Heart left ventricle (tissue), 16 donors: ENCODE measurements at regions of chr4 and their contacts with region 1.

Region 1: DNA sequence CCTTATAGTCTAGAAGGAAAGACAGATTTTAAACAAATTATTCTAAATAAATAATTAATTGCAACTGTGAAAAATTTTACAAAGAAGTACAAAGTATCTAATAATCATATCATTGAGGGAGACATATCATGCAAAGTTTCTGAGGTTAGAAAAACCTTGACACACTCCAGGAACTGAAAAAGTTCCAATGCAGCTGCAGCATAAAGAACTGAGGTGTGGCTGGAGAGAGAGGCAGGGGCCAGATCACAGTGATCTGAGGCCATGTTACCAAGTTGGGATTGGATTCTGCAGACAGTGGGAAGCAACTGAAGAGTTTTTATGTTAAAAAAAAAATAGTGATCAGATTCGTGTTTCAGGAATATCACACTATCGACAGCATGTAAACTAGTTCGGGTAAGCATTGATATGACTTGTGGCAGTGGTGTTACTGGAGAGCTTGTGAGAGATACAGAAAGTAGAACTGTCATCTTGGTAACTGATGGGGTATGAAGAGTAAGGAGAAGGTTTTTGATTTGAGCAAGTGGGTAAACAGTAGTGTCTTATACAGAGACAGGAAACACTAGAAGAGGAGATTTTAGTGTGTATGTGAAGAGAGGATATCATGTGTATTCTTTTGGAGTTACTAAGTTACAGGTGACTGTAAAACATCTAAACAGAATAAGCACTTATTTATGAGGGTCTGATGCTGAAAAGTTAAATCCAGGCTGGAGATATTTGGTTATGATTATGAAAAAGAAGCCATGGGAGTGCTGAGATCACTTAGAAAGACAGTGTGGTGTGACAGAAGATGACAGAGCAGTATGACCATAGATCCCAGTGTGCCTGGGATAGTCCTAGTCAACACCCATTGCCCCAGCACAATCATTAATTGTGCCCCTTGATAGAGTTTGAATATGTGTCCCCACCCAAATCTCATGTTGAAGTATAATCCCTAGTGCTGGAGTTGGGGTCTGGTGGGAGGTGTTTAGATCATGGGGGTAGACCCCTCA is 15.6 kb upstream of the SPRY1 start:
- DNase-seq: no peak
- ATAC-seq: no peak
- H3K4me3 ChIP-seq: no peak overlapping the region
- H3K27ac ChIP-seq: no peak overlapping the region
- H3K4me1 ChIP-seq: peaks cover 0 to 5% (median under 1%) of the 10 kb centered on the region in 12 donors
- H3K27me3 ChIP-seq: no peaks in the 10 kb centered on the region
- CTCF ChIP-seq: no peak
- POLR2A ChIP-seq: no peak

Region 2: GRCh38 chr4:122879001-122879400 is 502.0 kb before region 1 on chr4:
- intact Hi-C with region 1: no loop called
- DNase-seq: no peak
- ATAC-seq: no peak
- H3K4me3 ChIP-seq: no peak overlapping the region
- H3K27ac ChIP-seq: no peak overlapping the region
- H3K4me1 ChIP-seq: no peaks in the 10 kb centered on the region
- H3K27me3 ChIP-seq: no peaks in the 10 kb centered on the region
- CTCF ChIP-seq: no peak
- POLR2A ChIP-seq: no peak

Region 3: DNA sequence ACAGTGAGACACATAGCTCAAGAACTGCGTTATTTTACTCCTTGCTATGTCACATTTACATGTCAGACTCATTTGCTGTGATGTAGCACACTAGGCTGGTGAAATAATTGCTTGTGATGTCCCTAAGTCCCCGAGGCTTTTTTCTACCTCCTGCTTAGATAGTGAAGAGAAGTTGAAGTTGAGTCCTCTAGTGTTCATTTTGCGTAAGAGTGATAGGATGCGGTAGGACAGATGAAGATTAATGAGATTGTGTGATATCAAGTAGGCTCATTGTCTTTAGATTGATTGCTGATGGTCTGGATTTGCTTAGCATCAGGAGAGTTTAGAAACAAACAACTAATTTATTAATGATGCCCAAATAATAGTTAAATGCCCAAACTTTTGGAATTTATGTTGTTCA is 285.0 kb before region 1 on chr4:
- intact Hi-C with region 1: no loop called
- DNase-seq: no peak
- ATAC-seq: no peak
- H3K4me3 ChIP-seq: no peak overlapping the region
- H3K27ac ChIP-seq: no peak overlapping the region
- H3K4me1 ChIP-seq: no peaks in the 10 kb centered on the region
- H3K27me3 ChIP-seq: no peaks in the 10 kb centered on the region
- CTCF ChIP-seq: no peak
- POLR2A ChIP-seq: no peak

Region 4: DNA sequence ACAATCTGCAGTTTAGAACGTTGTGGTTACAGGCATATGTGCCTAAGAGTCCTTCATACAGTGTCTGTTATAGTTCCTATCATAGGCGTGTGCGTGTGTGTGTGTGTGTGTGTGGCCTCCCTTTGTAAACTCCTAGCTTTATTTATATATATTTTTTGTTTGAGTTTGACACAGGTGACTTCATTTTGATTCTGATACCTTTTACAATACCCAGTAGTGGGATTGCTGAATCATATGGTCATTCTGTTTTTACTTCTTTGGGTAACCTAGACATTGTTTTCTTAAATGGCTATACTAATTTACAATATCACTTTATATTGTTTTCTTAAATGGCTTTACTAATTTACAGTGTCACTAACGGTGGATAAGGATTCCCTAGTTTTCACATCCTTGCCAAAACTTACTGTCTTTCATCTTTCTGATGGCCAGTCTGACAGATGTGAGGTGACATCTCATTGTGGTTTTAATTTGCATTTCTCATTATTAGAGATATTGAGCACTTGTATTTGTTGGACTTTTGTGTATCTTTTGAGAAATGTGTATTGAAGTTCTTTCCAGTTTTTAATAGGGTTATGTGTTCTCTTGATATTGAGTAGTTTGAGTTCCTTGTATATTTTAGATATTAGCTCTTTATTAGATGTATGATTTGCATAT is 247.5 kb before region 1 on chr4:
- intact Hi-C with region 1: loop called in 1 of 10 experiments (anchors 10 kb)
- DNase-seq: no peak
- ATAC-seq: no peak
- H3K4me3 ChIP-seq: no peak overlapping the region
- H3K27ac ChIP-seq: no peak overlapping the region
- H3K4me1 ChIP-seq: no peaks in the 10 kb centered on the region
- H3K27me3 ChIP-seq: no peaks in the 10 kb centered on the region
- CTCF ChIP-seq: no peak
- POLR2A ChIP-seq: no peak

Region 5: DNA sequence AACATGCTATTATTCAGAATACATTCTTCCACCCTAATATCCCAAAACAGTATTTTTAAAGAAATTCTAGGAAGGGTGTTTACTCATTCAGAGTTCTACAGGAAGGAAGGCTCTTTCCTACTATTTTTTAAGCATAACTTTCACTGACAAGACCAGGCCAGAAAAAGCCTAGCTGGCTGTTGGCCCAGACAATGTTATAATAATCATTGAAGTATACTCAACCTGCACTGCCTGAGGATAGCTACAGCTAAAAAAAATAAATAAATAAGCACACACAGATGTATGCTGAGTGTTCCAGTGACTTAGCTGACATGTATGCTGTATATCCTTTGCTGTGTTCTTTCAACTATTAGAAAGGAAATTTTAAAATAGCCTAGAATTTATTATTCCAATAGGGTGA is 130.2 kb before region 1 on chr4:
- intact Hi-C with region 1: loop called in 2 of 10 experiments (anchors 5 to 10 kb)
- DNase-seq: peak; percentile 45 to 70 (median 63)
- ATAC-seq: peak; percentile 52 to 83 (median 82)
- H3K4me3 ChIP-seq: no peak overlapping the region
- H3K27ac ChIP-seq: peak overlapping the region in 9 of 12 donors; percentile 21 to 70 (median 44)
- H3K4me1 ChIP-seq: peaks cover 0 to 47% (median 29%) of the 10 kb centered on the region in 12 donors
- H3K27me3 ChIP-seq: no peaks in the 10 kb centered on the region
- CTCF ChIP-seq: no peak
- POLR2A ChIP-seq: no peak